Activated B cell treated with CpG ODN at 0.5 μM for 24 hours (primary cell): ENCODE measurements at regions of chr3 and their contacts with region 1.

Region 1: DNA sequence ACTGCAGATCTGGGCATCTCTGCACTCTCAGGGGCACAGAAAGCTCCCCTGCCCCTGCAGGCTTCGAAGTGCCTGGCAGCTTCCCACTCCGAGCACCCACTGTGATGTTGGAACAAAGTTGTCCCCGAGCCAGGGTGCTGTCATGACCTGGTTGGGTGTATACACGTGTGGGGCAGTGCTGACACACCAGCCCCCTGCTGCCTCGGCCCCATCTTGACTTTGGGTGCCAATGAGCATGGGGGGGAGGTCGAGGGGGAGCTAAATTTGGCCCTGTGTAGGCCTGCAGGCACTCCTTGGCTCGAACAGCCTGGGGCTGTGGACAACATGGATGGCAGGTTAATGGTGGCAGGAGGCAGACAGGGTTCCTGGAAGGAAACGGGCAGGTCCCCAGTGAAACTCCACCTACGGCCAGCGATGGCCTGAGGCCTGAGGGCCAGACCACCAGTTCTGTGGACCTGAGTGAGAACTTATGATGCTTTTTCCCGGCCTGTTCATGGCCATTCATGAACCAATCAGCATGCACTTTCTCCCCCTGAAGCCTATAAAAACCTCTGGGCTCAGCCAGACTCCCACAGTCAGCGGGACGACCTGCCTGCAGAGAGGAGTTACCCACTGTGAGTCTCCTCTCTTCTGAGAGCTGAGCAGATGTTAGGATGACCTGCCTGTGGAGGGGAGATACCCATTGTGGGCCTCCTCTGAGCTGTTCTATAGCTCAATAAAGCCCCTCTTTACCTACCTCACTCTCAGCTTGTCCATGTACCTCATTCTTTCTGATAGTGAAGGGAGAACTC is 1029.1 kb upstream of the GBE1 start:
- DNase-seq: no peak
- ATAC-seq: no peak
- H3K4me3 Mint-ChIP-seq: no peak overlapping the region
- H3K27ac Mint-ChIP-seq: no peak overlapping the region
- H3K4me1 Mint-ChIP-seq: no peaks in the 10 kb centered on the region
- H3K27me3 Mint-ChIP-seq: no peaks in the 10 kb centered on the region
- CTCF ChIP-seq: no peak

Region 2: GRCh38 chr3:82834098-82834497 is 43.6 kb after region 1 on chr3:
- CTCF ChIA-PET with region 1: no interaction called
- POLR2A ChIA-PET with region 1: no interaction called
- intact Hi-C with region 1: loop called (anchors 1 kb)
- DNase-seq: no peak
- ATAC-seq: no peak
- H3K4me3 Mint-ChIP-seq: no peak overlapping the region
- H3K27ac Mint-ChIP-seq: no peak overlapping the region
- H3K4me1 Mint-ChIP-seq: no peaks in the 10 kb centered on the region
- H3K27me3 Mint-ChIP-seq: no peaks in the 10 kb centered on the region
- CTCF ChIP-seq: no peak